Posterior vena cava (tissue), 2 donors: ENCODE measurements at regions of chr4 and their contacts with region 1.

Region 1: GRCh38 chr4:135306538-135306937 is 1104.9 kb upstream of the PABPC4L start:
- DNase-seq: no peak

Region 2: GRCh38 chr4:135065366-135065765 is 241.2 kb before region 1 on chr4:
- intact Hi-C with region 1: no loop called
- DNase-seq: no peak

Region 3: GRCh38 chr4:135244056-135244455 is 62.5 kb before region 1 on chr4:
- intact Hi-C with region 1: no loop called
- DNase-seq: no peak

Region 4: DNA sequence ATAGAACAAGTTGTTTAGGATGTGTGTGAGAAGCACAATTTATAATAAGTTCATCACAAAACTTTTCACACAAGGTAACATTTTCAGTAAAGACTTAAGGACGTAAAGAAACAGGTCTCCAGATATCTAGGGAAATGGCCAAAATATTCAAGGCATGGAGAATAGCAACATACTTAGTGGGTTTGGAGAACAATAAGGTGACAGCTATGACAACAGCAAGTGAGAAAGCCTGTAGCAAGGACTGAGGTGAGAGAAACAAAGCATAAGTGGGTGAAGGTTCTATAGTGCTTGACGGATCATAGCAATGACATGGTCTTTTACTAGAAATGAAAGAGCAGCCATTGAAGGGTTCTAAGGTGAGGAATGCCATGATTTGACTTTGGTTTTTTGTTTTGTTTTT is 888.4 kb after region 1 on chr4:
- intact Hi-C with region 1: loop called in 1 of 2 experiments (anchors 5 kb)
- DNase-seq: no peak

Region 5: DNA sequence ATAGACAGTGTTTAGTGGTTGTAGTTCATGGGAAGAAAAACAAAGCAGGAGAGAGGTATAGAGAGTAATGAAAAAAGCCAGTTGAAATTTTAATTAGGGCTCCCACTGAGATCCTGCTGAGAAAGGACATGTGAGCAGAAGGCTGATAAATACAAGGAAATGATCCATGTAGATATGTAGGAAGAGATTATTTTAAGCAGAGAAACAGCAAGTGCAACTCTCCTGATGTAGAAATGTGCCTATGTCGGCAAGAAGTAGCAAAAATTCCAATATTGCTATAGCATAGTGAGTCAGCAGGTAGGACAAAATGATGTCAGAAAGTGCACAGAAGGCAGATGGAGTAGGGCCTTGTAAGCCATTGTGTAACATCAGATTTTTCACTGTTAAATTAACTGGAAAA is 1198.5 kb after region 1 on chr4:
- intact Hi-C with region 1: no loop called
- DNase-seq: no peak